ENCODE measurements at regions of chr3 and their contacts with region 1.

Region 1: GRCh38 chr3:64030741-64031140 is 7.4 kb upstream of the PSMD6 start:
- DNase-seq: no peak
- H3K4me3 ChIP-seq: peak overlapping the region; percentile 34
- CTCF ChIP-seq: peak; percentile 85

Region 2: DNA sequence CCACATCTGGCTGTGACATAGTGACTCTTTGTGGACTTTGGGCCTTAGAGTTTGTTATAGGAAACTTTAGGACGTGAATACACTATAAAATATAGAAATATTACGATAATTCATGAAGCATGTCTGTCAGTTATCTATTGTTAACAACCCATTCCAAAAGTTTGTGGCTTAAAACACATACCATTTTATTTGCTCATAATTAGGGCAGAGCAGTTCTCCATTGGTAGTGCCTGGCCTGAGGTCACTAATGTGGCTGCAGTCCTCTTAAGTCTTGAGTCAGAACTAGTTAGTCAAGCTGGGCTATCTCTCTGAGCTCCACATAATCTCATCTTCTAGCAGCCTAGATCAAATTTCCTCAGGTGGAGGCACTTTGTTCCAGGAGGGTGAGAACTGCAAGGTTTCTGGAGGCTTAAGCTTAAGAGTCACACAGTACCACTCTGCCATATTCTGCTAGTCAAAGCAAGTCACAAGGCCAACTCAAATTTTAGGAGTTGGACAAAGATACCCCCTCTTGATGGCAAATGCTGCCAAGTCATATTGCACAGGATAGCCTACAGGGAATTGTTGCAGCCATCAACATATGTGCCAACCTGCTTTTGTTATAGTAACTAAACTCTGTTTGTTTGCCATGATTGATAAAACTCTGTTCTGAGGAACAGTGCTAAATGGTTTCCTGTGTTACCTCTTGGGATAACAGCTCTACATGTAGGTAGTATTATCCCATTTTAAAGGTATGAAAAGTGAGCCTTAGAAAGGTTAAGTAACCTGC is 158.4 kb before region 1 on chr3:
- CTCF ChIA-PET with region 1: no interaction called
- POLR2A ChIA-PET with region 1: no interaction called
- DNase-seq: peak; percentile 52
- H3K4me3 ChIP-seq: no peak overlapping the region
- CTCF ChIP-seq: no peak

Region 3: DNA sequence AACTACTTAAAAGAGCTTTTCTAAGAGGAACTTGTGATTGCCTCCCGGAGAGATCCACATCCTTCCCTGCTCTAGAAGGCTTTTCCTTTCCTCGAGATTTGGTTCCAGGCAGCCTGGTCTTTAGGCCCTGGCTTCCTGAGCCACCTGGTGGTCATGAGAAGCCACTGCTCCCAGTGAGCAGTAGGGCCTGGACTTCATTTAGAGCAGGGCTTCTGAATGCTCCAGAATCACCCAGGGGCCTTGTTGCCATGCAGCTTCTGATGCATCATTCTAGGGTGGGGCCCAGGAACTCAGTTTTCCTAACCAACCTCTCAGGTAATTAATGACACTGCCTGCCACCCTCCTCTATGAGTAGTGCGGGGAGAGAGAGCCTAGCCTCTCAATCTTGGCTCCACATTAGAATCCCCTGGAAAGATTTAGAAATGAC is 37.1 kb before region 1 on chr3:
- CTCF ChIA-PET with region 1: no interaction called
- POLR2A ChIA-PET with region 1: no interaction called
- DNase-seq: peak; percentile 23
- H3K4me3 ChIP-seq: no peak overlapping the region
- CTCF ChIP-seq: peak; percentile 92

Region 4: GRCh38 chr3:64058566-64058965 is 27.8 kb after region 1 on chr3:
- CTCF ChIA-PET with region 1: interaction called, 12 read pairs
- POLR2A ChIA-PET with region 1: no interaction called
- DNase-seq: no peak
- H3K4me3 ChIP-seq: no peak overlapping the region
- CTCF ChIP-seq: no peak

Region 5: DNA sequence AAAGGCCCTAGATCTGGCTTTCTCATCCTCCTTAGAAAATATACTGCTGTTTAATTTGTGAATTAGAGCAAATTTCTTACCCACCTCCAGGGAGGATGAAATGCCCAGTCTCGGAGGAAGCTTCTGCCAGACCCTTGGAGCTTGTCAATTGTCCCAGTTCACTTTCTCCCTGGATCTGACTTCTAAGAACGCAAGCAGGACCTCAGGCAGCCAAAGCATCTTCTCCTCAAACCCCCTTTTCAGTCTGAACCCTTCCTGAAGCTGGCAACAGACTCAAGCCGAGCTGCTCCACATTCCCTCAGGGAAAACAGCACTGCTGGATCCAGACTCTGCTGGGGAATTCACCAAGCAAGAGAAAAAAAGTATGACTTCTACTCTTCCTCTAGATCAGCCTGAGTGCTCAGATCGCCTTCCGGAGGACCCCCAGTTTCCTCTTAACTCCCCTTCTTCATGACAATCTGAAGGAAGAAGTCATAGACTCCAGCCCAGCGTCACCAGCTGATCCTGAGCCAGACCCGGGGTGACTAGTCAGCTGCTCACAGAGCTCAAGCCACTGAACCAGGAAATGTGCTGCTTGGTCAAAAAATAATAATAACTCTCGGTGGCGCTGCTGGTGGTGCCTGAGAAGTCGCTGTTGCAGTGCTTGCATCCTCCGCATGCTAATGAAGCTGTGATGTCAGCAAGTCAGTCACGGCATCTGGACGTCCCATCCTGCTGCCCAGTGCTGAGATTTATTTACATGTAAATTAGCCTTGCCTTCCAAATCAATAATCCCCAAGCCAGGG is 194.3 kb after region 1 on chr3 and contains the start of gene PRICKLE2:
- CTCF ChIA-PET with region 1: interaction called, 43 read pairs
- POLR2A ChIA-PET with region 1: no interaction called
- DNase-seq: peak; percentile 69
- H3K4me3 ChIP-seq: peak within 1 kb of the TSS; percentile 52
- CTCF ChIP-seq: peak; percentile 22

Region 6: GRCh38 chr3:64399205-64399800 is 368.6 kb after region 1 on chr3:
- CTCF ChIA-PET with region 1: interaction called, 39 read pairs
- POLR2A ChIA-PET with region 1: no interaction called
- DNase-seq: no peak
- H3K4me3 ChIP-seq: no peak overlapping the region
- CTCF ChIP-seq: peak; percentile 68

Region 7: DNA sequence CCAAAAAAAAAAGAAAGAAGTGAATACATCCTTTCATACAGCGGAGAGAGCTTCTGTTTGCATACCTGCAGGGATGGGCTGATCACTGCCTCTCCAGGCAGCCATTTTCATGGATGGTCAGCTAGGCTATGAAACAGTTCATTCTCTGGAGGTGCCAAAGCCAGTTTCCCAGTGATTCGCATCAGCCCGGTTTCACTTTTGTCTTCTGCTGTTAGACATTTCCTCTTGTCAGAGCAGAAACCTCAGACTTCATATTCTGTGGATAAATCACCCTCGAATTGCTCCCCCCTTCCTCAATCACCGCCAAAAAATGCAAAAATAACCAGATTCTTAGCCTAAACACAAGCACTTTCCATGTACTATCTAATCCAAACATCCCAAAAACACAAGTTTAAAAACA is 431.5 kb after region 1 on chr3:
- CTCF ChIA-PET with region 1: interaction called, 35 read pairs
- POLR2A ChIA-PET with region 1: no interaction called
- DNase-seq: peak; percentile 79
- H3K4me3 ChIP-seq: peak overlapping the region; percentile 28
- CTCF ChIP-seq: no peak